OCI-LY7 (cell line): ENCODE measurements at regions of chr12 and their contacts with region 1.

Region 1: GRCh38 chr12:10562306-10562933 is 51.0 kb downstream of the MAGOHB start:
- DNase-seq: peak; percentile 76
- H3K4me3 ChIP-seq: no peak overlapping the region
- H3K27ac ChIP-seq: peak overlapping the region; percentile 98
- H3K4me1 ChIP-seq: peaks cover 50% of the 10 kb centered on the region
- CTCF ChIP-seq: peak; percentile 98

Region 2: GRCh38 chr12:9741726-9742125 is 820.7 kb before region 1 on chr12:
- CTCF ChIA-PET with region 1: no interaction called
- POLR2A ChIA-PET with region 1: interaction called, 4 read pairs
- intact Hi-C with region 1: loop called (anchors 10 kb)
- DNase-seq: peak; percentile 86
- H3K4me3 ChIP-seq: peak overlapping the region; percentile 54
- H3K27ac ChIP-seq: peak overlapping the region; percentile 93
- H3K4me1 ChIP-seq: peaks cover 83% of the 10 kb centered on the region
- CTCF ChIP-seq: no peak

Region 3: DNA sequence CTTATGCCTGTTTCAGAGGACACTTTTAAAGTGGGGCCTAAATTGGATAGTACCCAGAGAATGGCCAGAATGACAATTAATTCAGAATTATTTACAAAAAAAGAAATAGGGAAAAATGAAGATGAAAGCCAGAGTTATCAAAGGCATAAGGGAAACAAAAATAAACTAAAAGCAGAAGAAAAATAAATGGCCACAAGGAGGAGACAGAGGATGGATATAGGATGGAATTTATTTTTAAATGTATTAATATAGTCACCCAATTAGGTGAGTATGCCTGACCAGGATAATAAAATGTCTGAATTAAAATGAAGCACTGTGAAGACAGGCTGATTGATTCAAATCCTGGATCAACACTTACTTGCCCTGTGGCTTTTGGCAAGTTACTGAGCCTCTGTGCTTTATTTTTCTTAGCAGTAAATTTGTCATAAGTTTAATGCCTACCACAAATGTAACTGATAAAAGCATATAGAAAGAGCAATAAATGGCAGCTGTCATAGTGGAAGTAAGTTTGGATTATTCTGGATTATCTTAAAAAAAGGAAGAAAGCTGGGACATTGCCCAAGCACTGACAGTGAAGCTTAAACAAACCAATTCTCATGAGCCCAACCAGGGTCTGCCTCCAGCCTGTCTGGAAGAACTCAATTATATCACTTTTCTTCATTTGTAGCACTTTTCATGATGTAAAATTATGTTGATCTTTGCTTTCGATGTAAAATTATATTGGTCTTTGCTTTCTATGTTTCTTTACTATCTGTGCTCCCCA is 528.5 kb before region 1 on chr12:
- CTCF ChIA-PET with region 1: no interaction called
- POLR2A ChIA-PET with region 1: no interaction called
- intact Hi-C with region 1: loop called (anchors 10 kb)
- DNase-seq: peak; percentile 9
- H3K4me3 ChIP-seq: no peak overlapping the region
- H3K27ac ChIP-seq: no peak overlapping the region
- H3K4me1 ChIP-seq: no peaks in the 10 kb centered on the region
- CTCF ChIP-seq: peak; percentile 81

Region 4: DNA sequence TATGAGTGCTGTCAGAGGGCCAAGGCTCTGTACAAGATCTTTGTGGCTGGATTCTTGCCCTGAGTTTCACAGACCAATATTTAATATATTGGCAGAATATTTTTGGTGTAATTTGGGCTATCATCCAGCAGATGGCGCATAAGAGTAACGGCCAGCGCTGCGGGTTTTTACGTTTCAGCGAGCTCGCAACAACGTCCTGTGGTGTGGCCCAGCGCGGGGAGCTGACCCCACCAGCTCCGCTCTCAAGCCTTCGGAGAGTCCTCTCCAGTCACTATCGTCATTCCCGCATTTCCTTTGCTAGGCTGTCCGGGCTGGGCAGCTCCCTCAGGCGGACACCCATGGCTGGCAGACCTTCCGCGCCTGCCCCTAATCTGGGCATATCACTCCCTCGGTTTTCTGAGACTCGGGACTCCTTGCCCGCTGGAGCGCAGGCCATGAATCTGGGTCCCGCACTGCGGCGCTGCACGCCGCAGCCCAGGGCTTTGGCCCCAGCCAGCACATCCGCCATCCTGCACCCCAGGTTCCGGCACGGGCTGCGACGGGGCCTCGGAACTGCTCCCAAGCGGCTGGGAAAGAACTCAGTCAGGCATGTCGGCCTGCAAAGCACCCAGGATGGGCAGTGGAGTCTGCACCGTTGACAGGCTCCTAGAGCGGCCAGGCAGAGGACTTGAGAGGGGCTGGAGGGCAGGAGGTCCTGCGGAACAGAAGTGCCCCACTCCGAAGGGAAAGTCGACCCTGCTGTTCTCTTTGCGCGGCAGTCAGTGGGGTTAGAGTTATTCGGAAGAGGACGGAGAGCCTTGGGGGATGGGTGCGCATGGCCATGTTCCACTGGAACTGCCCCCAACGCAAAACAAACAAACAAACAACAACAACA is 408.9 kb before region 1 on chr12:
- CTCF ChIA-PET with region 1: no interaction called
- POLR2A ChIA-PET with region 1: no interaction called
- intact Hi-C with region 1: loop called (anchors 1 kb)
- DNase-seq: peak; percentile 78
- H3K4me3 ChIP-seq: peak overlapping the region; percentile 70
- H3K27ac ChIP-seq: no peak overlapping the region
- H3K4me1 ChIP-seq: peaks cover 15% of the 10 kb centered on the region
- CTCF ChIP-seq: peak; percentile 95

Region 5: GRCh38 chr12:10190558-10191388 is 371.6 kb before region 1 on chr12:
- CTCF ChIA-PET with region 1: no interaction called
- POLR2A ChIA-PET with region 1: no interaction called
- intact Hi-C with region 1: no loop called
- DNase-seq: peak; percentile 86
- H3K4me3 ChIP-seq: no peak overlapping the region
- H3K27ac ChIP-seq: no peak overlapping the region
- H3K4me1 ChIP-seq: peaks cover 42% of the 10 kb centered on the region
- CTCF ChIP-seq: peak; percentile 93

Region 6: DNA sequence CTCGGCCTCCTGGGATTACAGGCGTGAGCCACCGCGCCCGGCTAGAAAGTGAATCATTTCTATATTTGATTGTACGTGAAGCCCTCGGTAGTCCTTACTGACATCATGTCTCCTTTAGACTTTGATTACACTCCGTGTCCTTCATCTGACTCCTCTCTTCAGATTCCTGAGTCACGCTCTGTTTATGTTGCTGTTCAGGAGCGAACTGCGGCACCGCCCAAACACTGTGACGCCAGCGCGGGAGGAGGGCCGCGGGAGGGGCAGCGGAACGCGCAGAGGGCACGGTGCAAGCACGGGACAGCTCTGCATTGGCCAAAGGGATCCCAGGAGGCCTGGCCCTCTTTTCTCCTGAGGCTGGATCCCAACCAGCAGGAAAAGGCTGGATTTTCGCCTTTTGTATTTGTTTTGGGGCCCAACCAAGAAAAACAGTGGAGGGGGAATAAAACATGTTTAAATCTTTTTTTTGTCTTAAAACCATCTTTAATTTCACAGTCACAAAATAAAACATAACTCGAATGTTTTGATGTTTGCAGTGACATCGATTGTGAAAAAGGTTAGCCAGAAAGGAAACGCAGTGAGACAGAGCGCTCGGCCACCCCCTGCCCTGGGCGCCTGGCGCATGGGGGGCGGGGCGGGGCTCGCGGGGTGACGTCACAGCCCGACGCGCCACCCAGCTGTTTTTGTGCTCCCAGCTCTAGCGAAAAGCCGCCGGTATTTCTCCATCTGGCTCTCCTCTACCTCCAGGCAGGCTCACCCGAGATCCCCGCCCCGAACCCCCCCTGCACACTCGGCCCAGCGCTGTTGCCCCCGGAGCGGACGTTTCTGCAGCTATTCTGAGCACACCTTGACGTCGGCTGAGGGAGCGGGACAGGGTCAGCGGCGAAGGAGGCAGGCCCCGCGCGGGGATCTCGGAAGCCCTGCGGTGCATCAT is 350.0 kb before region 1 on chr12 and contains the start of gene GABARAPL1:
- CTCF ChIA-PET with region 1: no interaction called
- POLR2A ChIA-PET with region 1: no interaction called
- intact Hi-C with region 1: no loop called
- DNase-seq: peak; percentile 79
- H3K4me3 ChIP-seq: peak within 1 kb of the TSS; percentile 98
- H3K27ac ChIP-seq: peak within 1 kb of the TSS; percentile 86
- H3K4me1 ChIP-seq: peaks cover 21% of the 10 kb centered on the region
- CTCF ChIP-seq: no peak
- total RNA-seq, gene GABARAPL1: 34.2 and 40.7 TPM in 2 replicates

Region 7: DNA sequence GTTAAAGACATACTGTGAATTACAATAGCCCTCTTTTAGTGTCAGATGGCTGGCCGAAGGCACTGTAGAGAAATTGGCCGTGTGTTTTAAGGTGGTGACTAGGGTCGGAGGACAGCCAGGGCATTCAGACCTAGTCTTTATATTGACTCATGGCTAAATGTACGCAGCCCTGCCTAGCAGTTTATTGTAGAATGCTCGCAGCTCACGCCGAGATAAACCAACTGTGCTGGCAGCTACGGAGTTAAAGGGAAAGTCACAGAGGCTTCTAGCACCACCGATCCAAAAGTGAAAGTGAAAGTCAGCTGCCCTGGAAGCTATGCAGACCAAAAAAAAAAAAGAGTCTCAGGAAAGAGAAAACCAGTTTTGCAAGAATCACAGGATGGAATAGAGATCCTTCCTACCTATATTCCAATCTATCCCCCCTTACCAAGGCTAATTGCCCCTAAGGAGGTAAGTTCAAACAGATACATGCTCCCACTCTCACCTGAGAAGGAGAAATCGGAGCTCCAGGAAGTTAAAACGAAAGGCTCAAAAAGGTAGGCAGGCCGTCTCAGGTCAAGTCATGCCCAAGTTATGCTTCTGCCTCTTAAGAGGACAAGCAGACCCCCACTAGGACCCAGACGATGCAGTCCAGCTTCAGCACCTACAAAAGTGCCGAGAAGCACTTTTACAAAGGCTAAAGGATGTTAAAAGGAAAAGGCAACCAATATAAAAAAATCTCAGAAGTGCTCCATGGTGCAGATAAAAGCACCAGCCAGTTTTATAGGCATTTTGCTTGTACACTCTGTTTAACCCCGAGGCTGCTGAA is 197.4 kb before region 1 on chr12:
- CTCF ChIA-PET with region 1: interaction called, 5 read pairs
- POLR2A ChIA-PET with region 1: interaction called, 10 read pairs
- intact Hi-C with region 1: loop called (anchors 1 kb)
- DNase-seq: peak; percentile 91
- H3K4me3 ChIP-seq: peak overlapping the region; percentile 71
- H3K27ac ChIP-seq: peak overlapping the region; percentile 84
- H3K4me1 ChIP-seq: peaks cover 44% of the 10 kb centered on the region
- CTCF ChIP-seq: no peak

Region 8: GRCh38 chr12:10673660-10674384 is 111.4 kb after region 1 on chr12 and contains the start of gene STYK1:
- CTCF ChIA-PET with region 1: no interaction called
- POLR2A ChIA-PET with region 1: no interaction called
- intact Hi-C with region 1: loop called (anchors 2 kb)
- DNase-seq: peak; percentile 67
- H3K4me3 ChIP-seq: peak within 1 kb of the TSS; percentile 65
- H3K27ac ChIP-seq: no peak within 1 kb of the TSS
- H3K4me1 ChIP-seq: peaks cover 21% of the 10 kb centered on the region
- CTCF ChIP-seq: peak; percentile 92
- total RNA-seq, gene STYK1: not detected in 2 replicates